PC-9 (cell line): ENCODE measurements at regions of chr1 and their contacts with region 1.

Region 1: DNA sequence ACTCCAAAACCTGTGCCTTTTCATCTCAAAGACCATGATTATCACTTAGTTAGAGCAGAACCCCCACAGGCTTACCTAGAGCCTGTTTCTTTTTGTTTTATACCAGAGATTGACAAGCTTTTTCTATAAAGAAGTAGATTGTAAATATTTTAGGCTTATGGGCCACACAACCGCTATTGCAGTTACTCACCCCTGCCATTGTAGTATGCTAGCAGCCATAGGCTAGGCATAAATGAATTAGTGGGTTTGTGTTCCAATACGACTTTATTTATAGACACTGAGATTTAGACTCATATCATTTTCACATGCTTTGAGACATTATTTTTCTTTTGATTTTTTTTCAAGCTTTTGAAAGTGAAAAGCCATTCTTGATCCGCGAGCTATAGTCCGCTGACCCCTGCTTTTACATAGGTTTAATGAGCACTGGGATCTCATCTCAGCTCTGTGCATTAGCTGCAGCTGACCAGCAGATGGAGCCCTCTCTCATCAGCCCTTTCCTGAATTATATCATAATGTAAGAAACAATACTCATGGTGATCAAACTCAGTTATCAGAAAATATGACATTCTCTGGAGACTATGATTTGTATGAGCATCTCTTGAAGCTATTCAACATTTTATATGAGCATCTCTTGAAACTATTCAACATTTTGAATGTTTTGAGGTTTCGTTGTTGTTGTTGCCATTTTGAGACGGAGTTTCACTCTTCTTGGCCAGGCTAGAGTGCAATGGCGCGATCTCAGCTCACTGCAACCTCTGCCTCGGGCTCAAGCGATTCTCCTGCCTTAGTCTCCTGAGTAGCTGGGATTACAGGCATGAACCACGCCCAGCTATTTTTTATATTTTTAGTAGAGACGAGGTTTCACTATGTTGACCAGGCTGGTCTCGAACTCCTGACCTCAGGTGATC is 111.9 kb upstream of the L1TD1 start:
- DNase-seq: peak in 1 of 2 experiments; percentile 27
- H3K4me3 ChIP-seq: no peak overlapping the region
- H3K27ac ChIP-seq: no peak overlapping the region
- H3K4me1 ChIP-seq: no peaks in the 10 kb centered on the region
- H3K27me3 ChIP-seq: no peaks in the 10 kb centered on the region
- CTCF ChIP-seq: peak; percentile 91

Region 2: GRCh38 chr1:61825393-61825792 is 257.3 kb before region 1 on chr1:
- CTCF ChIA-PET with region 1: no interaction called
- POLR2A ChIA-PET with region 1: no interaction called
- intact Hi-C with region 1: no loop called
- DNase-seq: no peak
- H3K4me3 ChIP-seq: no peak overlapping the region
- H3K27ac ChIP-seq: no peak overlapping the region
- H3K4me1 ChIP-seq: no peaks in the 10 kb centered on the region
- H3K27me3 ChIP-seq: no peaks in the 10 kb centered on the region
- CTCF ChIP-seq: no peak

Region 3: DNA sequence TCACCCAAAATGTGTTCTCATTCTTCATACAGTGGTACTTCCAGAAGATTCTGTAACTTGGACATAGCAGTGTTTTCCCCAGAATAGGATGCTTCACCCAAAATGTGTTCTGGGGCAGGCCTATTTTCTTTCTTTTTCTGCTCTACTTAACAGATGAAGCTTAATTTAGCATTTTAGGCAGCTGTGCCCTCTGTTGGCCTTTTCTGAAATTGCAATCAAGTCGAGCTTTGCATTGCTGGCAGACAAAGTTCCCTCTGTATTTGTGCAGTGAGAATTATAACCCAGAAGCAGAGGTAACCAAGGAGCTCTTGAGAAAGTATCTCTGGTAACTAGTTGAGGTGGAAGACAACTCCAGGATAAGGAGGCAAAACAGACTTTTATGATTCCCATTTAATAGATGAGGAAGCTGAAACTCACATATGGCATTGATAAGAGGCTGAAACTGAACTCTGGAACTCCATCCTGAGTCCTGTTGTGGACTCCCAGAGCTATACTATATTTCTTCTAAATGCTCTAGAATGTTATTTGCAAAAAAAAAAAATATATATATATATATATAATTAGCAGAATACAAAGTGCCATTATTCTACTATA is 61.6 kb after region 1 on chr1:
- CTCF ChIA-PET with region 1: interaction called, 5 read pairs
- POLR2A ChIA-PET with region 1: no interaction called
- intact Hi-C with region 1: loop called (anchors 2 kb)
- DNase-seq: peak in 1 of 2 experiments; percentile 49
- H3K4me3 ChIP-seq: no peak overlapping the region
- H3K27ac ChIP-seq: no peak overlapping the region
- H3K4me1 ChIP-seq: no peaks in the 10 kb centered on the region
- H3K27me3 ChIP-seq: no peaks in the 10 kb centered on the region
- CTCF ChIP-seq: peak; percentile 82

Region 4: GRCh38 chr1:63148825-63149645 is 1066.3 kb after region 1 on chr1:
- CTCF ChIA-PET with region 1: interaction called, 15 read pairs
- POLR2A ChIA-PET with region 1: no interaction called
- intact Hi-C with region 1: no loop called
- DNase-seq: peak in 1 of 2 experiments; percentile 3
- H3K4me3 ChIP-seq: no peak overlapping the region
- H3K27ac ChIP-seq: no peak overlapping the region
- H3K4me1 ChIP-seq: no peaks in the 10 kb centered on the region
- H3K27me3 ChIP-seq: 0 out of 2 replicates have a peak, but pooled peaks cover 9% of the 10 kb centered on the region
- CTCF ChIP-seq: peak; percentile 65